SK-N-SH (cell line): ENCODE measurements at regions of chr3 and their contacts with region 1.

Region 1: GRCh38 chr3:28667646-28668621 is 319.3 kb upstream of the AZI2 start:
- DNase-seq: peak; percentile 64
- H3K4me3 ChIP-seq: no peak overlapping the region; a peak in 1 of 4 replicates
- H3K27ac ChIP-seq: peak overlapping the region in 1 of 2 experiments; percentile 94; a peak in 2 of 4 replicates
- H3K4me1 ChIP-seq: peaks cover 0 to 14% of the 10 kb centered on the region in 2 experiments; a peak in 2 of 4 replicates
- H3K27me3 ChIP-seq: no peaks in the 10 kb centered on the region
- CTCF ChIP-seq: peak; percentile 86
- EP300 ChIP-seq: peak in 1 of 2 experiments; percentile 89; a peak in 2 of 4 replicates
- RAD21 ChIP-seq: peak; percentile 74

Region 2: DNA sequence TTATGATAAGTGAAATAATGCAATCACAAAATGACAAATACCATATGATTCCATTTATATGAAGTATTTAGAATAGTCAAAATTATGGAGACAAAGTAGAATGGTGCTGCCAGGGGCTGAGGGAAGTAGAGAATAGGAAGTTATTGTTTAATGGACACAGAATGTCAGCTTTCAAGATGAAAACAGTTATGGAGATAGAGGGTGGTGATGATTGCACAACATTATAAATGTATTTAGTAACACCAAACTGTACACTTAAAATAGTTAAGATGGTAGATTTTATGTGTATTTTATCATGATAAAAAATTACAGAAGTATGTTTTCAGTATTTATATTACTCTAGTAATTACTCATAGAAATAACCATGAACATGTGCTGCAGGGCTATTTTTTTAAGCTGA is 218.5 kb before region 1 on chr3:
- CTCF ChIA-PET with region 1: no interaction called
- POLR2A ChIA-PET with region 1: no interaction called
- DNase-seq: no peak
- H3K4me3 ChIP-seq: no peak overlapping the region
- H3K27ac ChIP-seq: no peak overlapping the region
- H3K4me1 ChIP-seq: no peaks in the 10 kb centered on the region
- H3K27me3 ChIP-seq: no peaks in the 10 kb centered on the region
- CTCF ChIP-seq: no peak
- EP300 ChIP-seq: no peak
- RAD21 ChIP-seq: no peak

Region 3: GRCh38 chr3:28476194-28476593 is 191.7 kb before region 1 on chr3:
- CTCF ChIA-PET with region 1: interaction called, 11 read pairs
- POLR2A ChIA-PET with region 1: no interaction called
- DNase-seq: peak; percentile 58
- H3K4me3 ChIP-seq: no peak overlapping the region; a peak in 1 of 4 replicates
- H3K27ac ChIP-seq: no peak overlapping the region
- H3K4me1 ChIP-seq: no peaks in the 10 kb centered on the region
- H3K27me3 ChIP-seq: no peaks in the 10 kb centered on the region
- CTCF ChIP-seq: peak; percentile 78
- EP300 ChIP-seq: no peak
- RAD21 ChIP-seq: peak; percentile 78

Region 4: DNA sequence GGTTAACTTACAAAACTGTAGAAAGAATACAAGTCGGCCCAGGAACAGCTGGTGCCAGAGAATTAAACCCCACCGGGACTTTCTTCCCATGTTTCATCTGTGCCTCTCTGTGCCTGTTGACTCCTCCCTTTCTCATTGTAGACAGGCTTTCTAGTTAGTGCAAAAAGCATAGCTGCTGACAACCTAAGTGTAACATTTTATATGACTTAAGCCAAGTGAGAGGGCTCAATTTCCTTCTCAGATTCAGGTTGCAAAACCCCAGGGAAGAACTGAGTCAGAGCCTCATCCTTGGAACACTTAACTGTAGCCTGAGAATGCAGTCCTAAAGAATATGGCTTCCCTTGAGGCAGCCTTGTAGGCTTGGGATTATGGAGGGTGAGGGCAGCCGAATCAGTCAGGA is 16.8 kb before region 1 on chr3:
- CTCF ChIA-PET with region 1: interaction called, 26 read pairs
- POLR2A ChIA-PET with region 1: no interaction called
- DNase-seq: no peak
- H3K4me3 ChIP-seq: no peak overlapping the region
- H3K27ac ChIP-seq: no peak overlapping the region
- H3K4me1 ChIP-seq: peaks cover 0 to 4% of the 10 kb centered on the region in 2 experiments; a peak in 2 of 4 replicates
- H3K27me3 ChIP-seq: no peaks in the 10 kb centered on the region
- CTCF ChIP-seq: no peak
- EP300 ChIP-seq: no peak
- RAD21 ChIP-seq: no peak

Region 5: GRCh38 chr3:28678086-28678485 is 10.2 kb after region 1 on chr3:
- CTCF ChIA-PET with region 1: interaction called, 16 read pairs
- POLR2A ChIA-PET with region 1: no interaction called
- DNase-seq: no peak
- H3K4me3 ChIP-seq: no peak overlapping the region
- H3K27ac ChIP-seq: no peak overlapping the region
- H3K4me1 ChIP-seq: peaks cover 0 to 9% of the 10 kb centered on the region in 2 experiments; a peak in 1 of 4 replicates
- H3K27me3 ChIP-seq: no peaks in the 10 kb centered on the region
- CTCF ChIP-seq: no peak
- EP300 ChIP-seq: no peak
- RAD21 ChIP-seq: no peak

Region 6: DNA sequence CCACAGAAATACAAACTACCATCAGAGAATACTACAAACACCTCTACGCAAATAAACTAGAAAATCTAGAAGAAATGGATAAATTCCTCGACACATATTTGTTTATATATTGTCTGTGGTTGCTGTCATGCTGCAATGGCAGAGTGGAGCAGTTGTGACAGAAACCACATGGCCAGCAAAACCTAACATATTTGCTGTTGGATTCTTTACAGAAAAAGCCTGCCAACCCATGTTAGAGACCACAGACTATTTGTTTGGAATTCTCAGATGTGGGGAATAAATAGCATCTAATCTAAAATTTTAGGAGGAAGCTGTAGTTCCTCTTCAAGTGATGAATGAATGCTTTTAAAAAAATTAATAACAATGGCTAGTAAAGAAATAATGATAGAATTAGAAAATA is 22.2 kb after region 1 on chr3:
- CTCF ChIA-PET with region 1: interaction called, 16 read pairs
- POLR2A ChIA-PET with region 1: no interaction called
- DNase-seq: no peak
- H3K4me3 ChIP-seq: no peak overlapping the region
- H3K27ac ChIP-seq: no peak overlapping the region
- H3K4me1 ChIP-seq: no peaks in the 10 kb centered on the region
- H3K27me3 ChIP-seq: no peaks in the 10 kb centered on the region
- CTCF ChIP-seq: no peak
- EP300 ChIP-seq: no peak
- RAD21 ChIP-seq: no peak

Region 7: GRCh38 chr3:28726840-28727239 is 58.9 kb after region 1 on chr3:
- CTCF ChIA-PET with region 1: interaction called, 13 read pairs
- POLR2A ChIA-PET with region 1: no interaction called
- DNase-seq: peak; percentile 40
- H3K4me3 ChIP-seq: no peak overlapping the region; a peak in 1 of 4 replicates
- H3K27ac ChIP-seq: no peak overlapping the region
- H3K4me1 ChIP-seq: no peaks in the 10 kb centered on the region; a peak in 1 of 4 replicates
- H3K27me3 ChIP-seq: no peaks in the 10 kb centered on the region
- CTCF ChIP-seq: peak; percentile 62
- EP300 ChIP-seq: no peak
- RAD21 ChIP-seq: peak; percentile 70